GM23248 (cell line): ENCODE measurements at regions of chr3 and their contacts with region 1.

Region 1: GRCh38 chr3:191391861-191392808 is 61.8 kb upstream of the UTS2B start:
- DNase-seq: no peak
- H3K4me3 ChIP-seq: no peak overlapping the region
- H3K27ac ChIP-seq: no peak overlapping the region
- H3K4me1 ChIP-seq: peaks cover 13% of the 10 kb centered on the region; the same call in 1 of the 2 replicates
- H3K27me3 ChIP-seq: no peaks in the 10 kb centered on the region

Region 2: GRCh38 chr3:191244242-191244867 is 147.8 kb before region 1 on chr3:
- in situ Hi-C with region 1: loop called (anchors 10 kb)
- DNase-seq: peak; percentile 47
- H3K4me3 ChIP-seq: no peak overlapping the region
- H3K27ac ChIP-seq: no peak overlapping the region
- H3K4me1 ChIP-seq: peaks cover 11% of the 10 kb centered on the region
- H3K27me3 ChIP-seq: no peaks in the 10 kb centered on the region